PC-9 (cell line): ENCODE measurements at regions of chr14 and their contacts with region 1.

Region 1: DNA sequence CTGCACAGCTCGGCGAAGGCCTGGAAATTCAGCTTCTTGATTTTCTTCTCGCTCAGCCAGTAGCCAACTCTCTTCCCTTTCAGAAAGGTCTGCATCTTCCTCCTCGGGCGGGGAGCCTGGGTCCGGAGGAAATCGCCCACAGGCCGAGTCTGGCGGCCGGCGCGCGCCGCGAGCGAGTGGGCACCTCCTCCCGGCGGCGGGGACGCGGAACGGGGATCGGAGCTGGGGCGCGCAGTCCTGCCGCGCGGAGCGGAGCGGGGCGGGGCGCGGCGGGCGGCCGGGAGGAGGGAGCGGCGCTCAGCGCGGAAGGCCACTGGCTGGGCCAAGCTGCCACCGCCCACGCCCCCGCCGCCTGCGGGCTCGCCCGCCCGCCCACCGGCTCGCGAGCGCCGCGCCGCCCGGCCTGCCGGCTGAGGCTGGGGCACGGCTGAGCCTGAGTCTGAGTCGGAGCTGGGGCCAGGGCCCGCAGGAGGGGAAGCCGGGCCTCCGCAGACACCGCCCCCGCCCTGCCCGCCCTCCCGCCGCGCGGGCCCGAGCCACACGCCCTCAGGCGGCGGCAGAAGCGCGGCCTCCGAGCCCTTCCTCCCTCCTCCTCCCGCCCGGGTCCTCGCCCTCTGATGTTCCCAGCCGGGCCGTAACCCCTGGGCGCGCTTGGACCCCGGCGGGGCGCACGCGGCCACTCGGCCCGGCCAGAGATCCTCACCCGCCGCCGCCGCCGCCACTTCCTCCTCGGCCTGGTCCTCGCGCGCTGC is 480 bp downstream of the ITPK1 start:
- DNase-seq: peak; percentile 59 to 90
- H3K4me3 ChIP-seq: peak overlapping the region; percentile 100
- H3K27ac ChIP-seq: peak overlapping the region; percentile 54
- H3K4me1 ChIP-seq: peaks cover 31% of the 10 kb centered on the region
- H3K27me3 ChIP-seq: no peaks in the 10 kb centered on the region
- CTCF ChIP-seq: no peak

Region 2: GRCh38 chr14:92945959-92946846 is 169.0 kb before region 1 on chr14:
- CTCF ChIA-PET with region 1: no interaction called
- POLR2A ChIA-PET with region 1: no interaction called
- intact Hi-C with region 1: loop called (anchors 2 kb)
- DNase-seq: peak; percentile 90 to 96
- H3K4me3 ChIP-seq: no peak overlapping the region
- H3K27ac ChIP-seq: peak overlapping the region; percentile 53; the same call in 1 of the 2 replicates
- H3K4me1 ChIP-seq: peaks cover 14% of the 10 kb centered on the region
- H3K27me3 ChIP-seq: no peaks in the 10 kb centered on the region
- CTCF ChIP-seq: no peak

Region 3: DNA sequence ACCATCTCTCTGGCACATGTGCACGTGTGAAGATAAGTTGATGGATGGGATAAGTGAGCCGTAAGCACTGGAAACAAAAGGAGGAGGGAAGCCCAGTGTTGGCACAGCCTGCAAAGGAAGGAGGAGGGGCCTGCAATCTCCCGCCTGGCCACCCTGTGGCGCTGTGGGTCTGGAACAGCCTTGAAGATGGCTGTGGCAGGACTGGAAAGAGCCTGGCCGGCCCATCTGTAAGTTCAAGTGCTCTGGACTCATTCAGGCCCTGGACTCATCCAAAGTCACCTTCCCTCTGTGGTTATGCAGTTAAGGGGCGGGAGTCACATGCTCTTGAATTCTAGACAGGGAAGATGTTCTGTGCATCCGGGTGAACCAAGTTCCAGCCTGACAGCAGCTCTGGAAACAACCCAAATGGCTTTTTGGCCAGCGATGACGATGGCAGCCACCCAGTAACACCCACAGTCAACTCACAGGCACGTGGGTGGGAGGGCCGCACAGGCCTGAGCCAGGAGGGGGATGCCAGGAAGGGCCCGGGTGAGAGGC is 141.9 kb before region 1 on chr14:
- CTCF ChIA-PET with region 1: interaction called, 3 read pairs
- POLR2A ChIA-PET with region 1: no interaction called
- intact Hi-C with region 1: loop called (anchors 1 kb)
- DNase-seq: peak; percentile 52 to 75
- H3K4me3 ChIP-seq: no peak overlapping the region
- H3K27ac ChIP-seq: no peak overlapping the region
- H3K4me1 ChIP-seq: no peaks in the 10 kb centered on the region
- H3K27me3 ChIP-seq: no peaks in the 10 kb centered on the region
- CTCF ChIP-seq: peak; percentile 90

Region 4: GRCh38 chr14:93023039-93023438 is 92.2 kb before region 1 on chr14:
- CTCF ChIA-PET with region 1: no interaction called
- POLR2A ChIA-PET with region 1: no interaction called
- intact Hi-C with region 1: no loop called
- DNase-seq: no peak
- H3K4me3 ChIP-seq: no peak overlapping the region
- H3K27ac ChIP-seq: no peak overlapping the region
- H3K4me1 ChIP-seq: peaks cover 6% of the 10 kb centered on the region; the same call in 1 of the 2 replicates
- H3K27me3 ChIP-seq: no peaks in the 10 kb centered on the region
- CTCF ChIP-seq: no peak

Region 5: DNA sequence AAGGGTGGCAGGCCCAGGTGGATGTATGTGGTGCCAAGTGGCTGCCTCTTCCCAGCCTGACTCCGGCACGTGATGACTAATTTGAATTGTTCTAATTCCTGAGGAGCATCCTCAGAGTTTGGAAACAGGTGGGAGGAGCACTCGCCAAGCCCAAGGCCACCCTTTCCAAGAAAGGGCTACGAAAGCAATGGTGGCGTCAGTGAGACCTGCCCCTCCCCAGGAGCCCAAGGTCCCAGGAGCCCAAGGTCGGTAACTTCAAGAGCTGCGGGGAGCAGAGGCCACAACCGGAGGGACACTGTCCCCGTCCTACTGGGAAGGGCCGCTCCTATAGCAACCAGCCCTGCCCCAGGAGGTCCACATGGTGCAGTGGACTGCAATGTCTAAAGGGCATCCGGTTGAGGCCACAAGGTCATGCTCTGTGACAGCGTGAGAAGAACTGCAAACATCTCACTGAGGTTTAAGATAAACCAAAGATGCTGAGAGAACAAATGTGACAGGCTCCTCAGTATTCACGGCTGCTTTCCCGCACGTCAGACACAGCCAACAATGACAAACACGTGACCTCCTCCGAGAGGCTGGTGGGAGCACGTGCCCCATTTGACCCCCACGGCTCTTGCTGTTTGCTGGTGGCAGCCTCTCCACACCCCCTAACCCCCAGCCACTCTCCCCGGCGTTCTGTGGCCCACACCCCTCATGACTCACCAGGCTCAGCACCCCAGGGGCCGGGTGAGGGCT is 79.2 kb before region 1 on chr14:
- CTCF ChIA-PET with region 1: interaction called, 4 read pairs
- POLR2A ChIA-PET with region 1: no interaction called
- intact Hi-C with region 1: loop called (anchors 1 kb)
- DNase-seq: peak; percentile 67 to 78
- H3K4me3 ChIP-seq: no peak overlapping the region
- H3K27ac ChIP-seq: peak overlapping the region; percentile 90
- H3K4me1 ChIP-seq: peaks cover 100% of the 10 kb centered on the region
- H3K27me3 ChIP-seq: no peaks in the 10 kb centered on the region
- CTCF ChIP-seq: no peak

Region 6: GRCh38 chr14:93079865-93080403 is 35.3 kb before region 1 on chr14:
- CTCF ChIA-PET with region 1: interaction called, 12 read pairs
- POLR2A ChIA-PET with region 1: no interaction called
- intact Hi-C with region 1: no loop called
- DNase-seq: no peak
- H3K4me3 ChIP-seq: no peak overlapping the region
- H3K27ac ChIP-seq: no peak overlapping the region
- H3K4me1 ChIP-seq: peaks cover 13% of the 10 kb centered on the region
- H3K27me3 ChIP-seq: no peaks in the 10 kb centered on the region
- CTCF ChIP-seq: no peak

Region 7: DNA sequence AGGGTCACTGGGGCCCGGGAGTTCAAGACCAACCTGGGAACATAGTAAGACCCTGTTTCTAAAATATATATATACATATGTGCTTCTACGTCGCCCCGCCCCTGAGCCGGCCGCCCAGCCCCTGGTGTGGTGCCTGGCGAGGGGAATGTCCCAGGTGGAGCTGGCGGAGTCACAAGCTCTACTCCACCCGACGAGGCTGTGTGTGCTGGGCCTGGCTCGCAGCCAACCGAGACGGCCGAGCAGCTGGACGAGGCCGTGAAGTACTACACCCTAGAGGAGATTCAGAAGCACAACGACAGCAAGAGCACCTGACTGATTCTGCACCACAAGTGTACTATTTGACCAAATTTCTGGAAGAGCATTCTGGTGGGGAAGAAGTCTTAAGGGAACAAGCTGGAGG is 22.6 kb after region 1 on chr14:
- CTCF ChIA-PET with region 1: no interaction called
- POLR2A ChIA-PET with region 1: interaction called, 3 read pairs
- intact Hi-C with region 1: loop called (anchors 1 kb)
- DNase-seq: no peak
- H3K4me3 ChIP-seq: no peak overlapping the region
- H3K27ac ChIP-seq: no peak overlapping the region
- H3K4me1 ChIP-seq: peaks cover 30% of the 10 kb centered on the region
- H3K27me3 ChIP-seq: no peaks in the 10 kb centered on the region
- CTCF ChIP-seq: no peak

Region 8: GRCh38 chr14:93619176-93619793 is 504.0 kb after region 1 on chr14:
- CTCF ChIA-PET with region 1: no interaction called
- POLR2A ChIA-PET with region 1: interaction called, 3 read pairs
- intact Hi-C with region 1: loop called (anchors 5 kb)
- DNase-seq: peak in 1 of 2 experiments; percentile 7
- H3K4me3 ChIP-seq: no peak overlapping the region
- H3K27ac ChIP-seq: no peak overlapping the region
- H3K4me1 ChIP-seq: no peaks in the 10 kb centered on the region
- H3K27me3 ChIP-seq: peaks cover 50% of the 10 kb centered on the region
- CTCF ChIP-seq: peak; percentile 69